ENCODE measurements at regions of chr1 and their contacts with region 1.

Region 1: GRCh38 chr1:50368179-50369012 is 54.8 kb downstream of the DMRTA2 start:
- DNase-seq: peak in 4 of 5 donors; percentile 21 to 52 (median 38)
- H3K4me3 ChIP-seq: no peak overlapping the region
- H3K27ac ChIP-seq: no peak overlapping the region
- H3K4me1 ChIP-seq: peaks cover 2% of the 10 kb centered on the region
- H3K27me3 ChIP-seq: no peaks in the 10 kb centered on the region
- CTCF ChIP-seq: peak in 2 of 3 donors; percentile 46 to 51
- EP300 ChIP-seq: no peak
- POLR2A ChIP-seq: no peak

Region 2: DNA sequence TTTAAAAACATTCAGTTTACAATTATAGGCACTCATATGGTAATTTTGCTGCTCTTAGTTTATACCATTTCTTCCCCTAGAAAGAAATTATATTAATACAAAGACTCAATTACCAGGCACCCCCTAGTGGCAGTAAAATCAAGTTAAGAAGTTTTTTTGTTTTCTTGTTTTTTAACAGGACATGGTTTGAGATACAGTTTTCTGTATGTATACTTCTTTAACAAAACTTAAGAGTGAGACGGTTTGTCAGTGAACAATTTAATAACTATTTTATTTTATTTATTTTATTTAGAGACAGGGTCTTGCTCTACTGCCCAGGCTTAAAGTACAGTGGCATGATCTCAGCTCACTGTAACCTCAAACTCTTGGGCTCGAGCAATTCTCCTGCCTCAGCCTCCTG is 367.0 kb after region 1 on chr1:
- intact Hi-C with region 1: loop called in 1 of 4 experiments (anchors 10 kb)
- DNase-seq: no peak
- H3K4me3 ChIP-seq: no peak overlapping the region
- H3K27ac ChIP-seq: no peak overlapping the region
- H3K4me1 ChIP-seq: no peaks in the 10 kb centered on the region
- H3K27me3 ChIP-seq: no peaks in the 10 kb centered on the region
- CTCF ChIP-seq: no peak
- EP300 ChIP-seq: no peak
- POLR2A ChIP-seq: no peak